Posterior vena cava (tissue), 2 donors: ENCODE measurements at regions of chr3 and their contacts with region 1.

Region 1: GRCh38 chr3:127822698-127823425 is 547 bp upstream of the MGLL start:
- DNase-seq: peak; percentile 88

Region 2: GRCh38 chr3:127690823-127691452 is 131.9 kb before region 1 on chr3:
- intact Hi-C with region 1: loop called (anchors 5 kb)
- DNase-seq: peak; percentile 82

Region 3: DNA sequence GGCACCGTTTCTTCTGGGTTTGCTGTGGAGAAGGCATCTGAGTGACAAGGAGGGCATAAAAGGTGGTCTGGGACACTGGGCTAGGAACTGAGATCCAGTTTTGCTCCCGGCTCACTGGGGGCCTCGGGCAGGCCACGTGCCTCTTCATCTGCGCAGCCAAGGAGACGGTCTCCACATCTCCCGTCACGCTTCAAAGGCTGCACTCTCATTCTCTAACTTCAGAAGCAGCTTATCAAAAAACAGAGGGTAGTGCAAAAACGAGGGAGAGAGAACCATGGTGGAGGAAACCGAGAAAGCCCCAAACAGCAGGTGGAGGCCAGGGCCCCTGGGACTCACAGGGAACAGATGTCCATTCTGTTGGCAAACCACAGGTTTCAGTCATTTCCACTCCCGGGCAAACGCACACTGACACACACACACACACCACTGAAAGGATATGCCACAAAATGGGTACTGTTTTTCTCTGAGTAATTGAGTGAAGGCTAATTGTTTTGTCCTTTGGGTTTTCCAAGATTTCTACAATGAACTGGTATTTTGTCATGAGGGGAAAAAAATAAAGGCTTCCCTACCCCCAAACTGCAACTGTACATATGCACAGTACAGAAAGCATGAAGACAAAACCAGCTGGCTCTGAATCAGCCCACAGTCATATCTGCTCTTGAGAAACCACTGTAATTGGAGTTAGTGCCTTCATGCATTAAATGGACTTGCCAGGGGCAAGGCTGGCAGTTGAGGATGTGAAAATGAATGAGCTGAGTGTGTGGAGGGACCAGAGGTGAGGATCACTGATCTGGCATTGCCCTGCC is 72.4 kb before region 1 on chr3:
- intact Hi-C with region 1: loop called in 1 of 2 experiments (anchors 5 kb)
- DNase-seq: peak; percentile 46

Region 4: DNA sequence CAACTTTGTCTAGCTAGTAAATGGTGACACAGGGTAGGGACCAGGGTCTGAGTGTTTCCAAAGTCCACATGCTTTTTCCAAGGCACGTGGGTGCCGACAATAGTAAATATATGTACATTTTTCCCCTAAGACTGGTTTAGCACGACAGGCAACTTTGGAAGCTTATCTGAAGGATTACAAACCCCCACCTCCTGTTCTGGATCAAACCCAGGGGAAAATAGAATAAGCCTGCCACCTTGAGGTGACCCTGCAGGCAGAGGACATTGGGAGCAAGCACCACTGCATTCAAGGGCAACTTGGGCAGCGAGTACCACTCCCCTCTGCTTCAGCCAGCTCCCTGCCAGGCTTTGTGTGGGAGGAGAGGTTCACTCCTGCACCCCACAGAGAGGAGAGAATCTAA is 137.0 kb after region 1 on chr3:
- intact Hi-C with region 1: loop called in 1 of 2 experiments (anchors 10 kb)
- DNase-seq: no peak

Region 5: GRCh38 chr3:128226795-128227395 is 404.0 kb after region 1 on chr3:
- intact Hi-C with region 1: no loop called
- DNase-seq: peak; percentile 86